Activated T-helper 1 cell treated with anti-CD3 and anti-CD28 coated beads, Interleukin-12 subunit alpha, Interleukin-12 subunit beta, Interleukin-2, Interleukin-4 antibody, amounts not matched to agents 30 ng/mL and 10 ng/mL and 1 ng/mL, durations not matched to agents 14 hours and 24 hours and 36 hours (primary cell): ENCODE measurements at regions of chr6 and their contacts with region 1.

Region 1: GRCh38 chr6:28838634-28839442 is 84.9 kb downstream of the TRIM27 start:
- DNase-seq: peak; percentile 76
- H3K4me3 Mint-ChIP-seq: peak overlapping the region; percentile 96
- H3K27ac Mint-ChIP-seq: peak overlapping the region; percentile 93
- H3K4me1 Mint-ChIP-seq: peaks cover 19% of the 10 kb centered on the region
- H3K27me3 Mint-ChIP-seq: peaks cover 47% of the 10 kb centered on the region

Region 2: DNA sequence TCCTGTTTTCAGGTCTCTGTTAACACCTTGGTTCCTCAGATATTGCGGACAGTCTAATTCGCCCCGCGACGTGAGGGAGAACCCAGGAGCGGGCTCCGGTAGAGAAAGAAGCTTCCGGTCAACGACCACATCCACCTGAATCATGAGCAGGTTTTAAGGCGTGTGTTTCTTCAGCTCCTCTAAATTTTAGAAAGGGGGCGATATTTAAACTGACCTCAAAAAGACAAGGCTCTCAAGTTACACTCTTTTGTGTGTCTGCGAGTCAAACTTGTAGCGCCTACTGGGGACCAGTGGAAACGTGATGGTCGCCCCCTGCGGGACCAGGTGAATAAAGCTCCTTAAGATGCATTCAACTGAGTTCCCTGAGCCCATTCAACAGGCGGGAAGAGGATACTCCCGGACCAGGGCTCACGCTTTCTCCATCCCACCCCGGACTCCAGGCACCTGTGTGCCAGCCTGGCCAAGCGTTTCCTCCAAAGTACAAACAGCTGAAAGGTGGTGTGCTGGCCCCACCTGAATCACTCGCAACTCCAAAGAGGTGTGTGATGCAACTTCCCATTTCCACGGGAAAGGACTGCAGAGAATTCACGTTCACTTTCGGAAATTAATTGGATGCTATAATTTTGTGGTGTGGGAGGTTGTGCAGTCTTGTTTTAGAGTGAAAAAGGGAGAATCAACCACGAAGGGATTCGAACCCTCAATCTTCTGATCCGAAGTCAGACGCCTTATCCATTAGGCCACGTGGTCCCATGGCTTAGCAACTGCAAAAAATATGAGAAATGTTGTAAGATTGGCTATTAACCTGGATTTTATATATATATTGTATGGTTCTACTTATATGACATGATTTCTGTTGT is 296.2 kb before region 1 on chr6:
- intact Hi-C with region 1: loop called (anchors 1 kb)
- DNase-seq: peak; percentile 18
- H3K4me3 Mint-ChIP-seq: peak overlapping the region; percentile 77
- H3K27ac Mint-ChIP-seq: peak overlapping the region; percentile 44
- H3K4me1 Mint-ChIP-seq: peaks cover 28% of the 10 kb centered on the region
- H3K27me3 Mint-ChIP-seq: peaks cover 44% of the 10 kb centered on the region

Region 3: DNA sequence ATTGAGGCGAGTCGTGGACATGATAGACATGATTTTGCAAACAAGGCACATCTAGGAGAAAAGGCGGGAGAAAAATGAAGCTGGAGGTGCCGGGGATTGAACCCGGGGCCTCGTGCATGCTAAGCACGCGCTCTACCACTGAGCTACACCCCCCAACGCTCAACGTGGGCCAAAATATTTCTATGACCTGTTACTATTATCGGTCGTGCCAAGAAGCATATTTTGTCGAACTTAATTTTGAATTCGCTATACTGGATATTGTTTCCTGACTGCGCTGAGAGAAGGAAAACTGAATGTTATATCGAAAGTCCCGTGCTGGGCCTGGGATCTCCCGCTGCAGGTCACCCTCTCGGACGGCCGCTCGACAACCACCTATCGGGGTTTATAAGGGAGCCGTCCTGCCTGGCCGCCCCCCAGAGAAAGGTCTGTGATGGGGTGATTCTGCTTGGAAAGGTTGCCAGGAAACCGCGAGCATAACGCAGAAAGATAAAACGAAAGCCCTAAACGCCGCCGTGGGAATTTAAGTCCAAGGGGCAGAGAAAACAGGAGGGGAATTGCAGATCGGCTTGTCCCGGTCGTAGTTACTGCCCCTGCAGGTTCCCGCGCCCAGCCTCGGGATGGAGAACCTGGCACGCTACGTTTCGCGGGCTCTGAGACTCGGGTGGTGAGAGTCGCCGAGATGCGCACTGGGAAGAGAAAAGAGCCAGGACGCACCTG is 24.9 kb after region 1 on chr6:
- intact Hi-C with region 1: loop called (anchors 1 kb)
- DNase-seq: peak; percentile 80
- H3K4me3 Mint-ChIP-seq: peak overlapping the region; percentile 94
- H3K27ac Mint-ChIP-seq: peak overlapping the region; percentile 93
- H3K4me1 Mint-ChIP-seq: peaks cover 47% of the 10 kb centered on the region
- H3K27me3 Mint-ChIP-seq: peaks cover 17% of the 10 kb centered on the region

Region 4: GRCh38 chr6:28895134-28895812 is 56.4 kb after region 1 on chr6:
- intact Hi-C with region 1: loop called (anchors 1 kb)
- DNase-seq: peak; percentile 89
- H3K4me3 Mint-ChIP-seq: peak overlapping the region; percentile 90
- H3K27ac Mint-ChIP-seq: peak overlapping the region; percentile 100
- H3K4me1 Mint-ChIP-seq: peaks cover 25% of the 10 kb centered on the region
- H3K27me3 Mint-ChIP-seq: peaks cover 6% of the 10 kb centered on the region

Region 5: GRCh38 chr6:28981833-28982475 is 143.1 kb after region 1 on chr6:
- intact Hi-C with region 1: loop called (anchors 1 kb)
- DNase-seq: peak; percentile 59
- H3K4me3 Mint-ChIP-seq: peak overlapping the region; percentile 90
- H3K27ac Mint-ChIP-seq: peak overlapping the region; percentile 95
- H3K4me1 Mint-ChIP-seq: peaks cover 59% of the 10 kb centered on the region
- H3K27me3 Mint-ChIP-seq: peaks cover 22% of the 10 kb centered on the region

Region 6: DNA sequence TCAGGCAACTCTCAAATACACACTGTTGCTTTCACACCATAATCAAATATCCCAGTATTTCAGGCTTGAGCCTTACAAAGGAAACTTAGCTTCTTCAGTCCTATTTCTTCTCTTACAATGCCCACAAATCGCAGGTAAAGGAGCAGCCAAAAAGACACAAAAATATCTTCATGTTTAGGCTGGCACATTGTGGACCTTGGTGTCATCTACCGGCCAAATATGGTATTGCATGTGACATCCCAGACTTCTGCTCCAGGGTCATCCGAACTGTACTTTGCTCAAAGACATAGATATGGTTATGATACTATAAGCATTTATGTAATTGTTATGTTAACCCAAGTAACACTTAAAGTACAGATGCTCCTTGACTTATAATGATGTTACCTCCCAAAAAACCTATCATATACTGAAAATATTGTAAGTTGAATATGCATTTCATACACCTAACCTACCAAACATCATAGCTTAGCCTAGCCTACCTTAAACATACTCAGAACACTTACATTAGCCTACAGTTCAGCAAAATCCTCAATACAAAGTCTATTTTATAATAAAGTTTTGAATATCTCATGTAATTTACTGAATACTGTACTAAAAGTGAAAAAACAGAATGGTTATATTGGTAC is 750.7 kb after region 1 on chr6:
- intact Hi-C with region 1: loop called (anchors 1 kb)
- DNase-seq: peak; percentile 40
- H3K4me3 Mint-ChIP-seq: no peak overlapping the region
- H3K27ac Mint-ChIP-seq: no peak overlapping the region
- H3K4me1 Mint-ChIP-seq: no peaks in the 10 kb centered on the region
- H3K27me3 Mint-ChIP-seq: peaks cover 11% of the 10 kb centered on the region